Left colon (tissue), 2 donors: ENCODE measurements at regions of chr21 and their contacts with region 1.

Region 1: DNA sequence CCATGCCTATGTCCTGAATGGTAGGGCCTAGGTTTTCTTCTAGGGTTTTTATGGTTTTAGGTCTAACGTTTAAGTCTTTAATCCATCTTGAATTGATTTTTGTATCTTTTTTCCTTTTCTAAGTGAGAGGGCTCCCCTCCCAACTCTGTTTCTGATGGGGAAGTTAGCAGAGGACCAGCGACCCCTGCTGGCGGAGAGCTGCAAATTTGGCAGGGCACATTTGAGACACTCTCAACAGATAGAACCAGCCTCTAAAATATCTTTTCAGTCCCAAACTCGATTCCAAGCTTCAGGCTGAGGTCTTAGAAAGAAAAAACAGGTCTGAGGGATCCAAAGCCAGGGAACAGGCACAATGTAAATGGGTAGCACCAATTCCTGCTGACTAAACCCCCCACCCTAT is 32.5 kb downstream of the LRRC3 start:
- DNase-seq: no peak
- ATAC-seq: no peak

Region 2: DNA sequence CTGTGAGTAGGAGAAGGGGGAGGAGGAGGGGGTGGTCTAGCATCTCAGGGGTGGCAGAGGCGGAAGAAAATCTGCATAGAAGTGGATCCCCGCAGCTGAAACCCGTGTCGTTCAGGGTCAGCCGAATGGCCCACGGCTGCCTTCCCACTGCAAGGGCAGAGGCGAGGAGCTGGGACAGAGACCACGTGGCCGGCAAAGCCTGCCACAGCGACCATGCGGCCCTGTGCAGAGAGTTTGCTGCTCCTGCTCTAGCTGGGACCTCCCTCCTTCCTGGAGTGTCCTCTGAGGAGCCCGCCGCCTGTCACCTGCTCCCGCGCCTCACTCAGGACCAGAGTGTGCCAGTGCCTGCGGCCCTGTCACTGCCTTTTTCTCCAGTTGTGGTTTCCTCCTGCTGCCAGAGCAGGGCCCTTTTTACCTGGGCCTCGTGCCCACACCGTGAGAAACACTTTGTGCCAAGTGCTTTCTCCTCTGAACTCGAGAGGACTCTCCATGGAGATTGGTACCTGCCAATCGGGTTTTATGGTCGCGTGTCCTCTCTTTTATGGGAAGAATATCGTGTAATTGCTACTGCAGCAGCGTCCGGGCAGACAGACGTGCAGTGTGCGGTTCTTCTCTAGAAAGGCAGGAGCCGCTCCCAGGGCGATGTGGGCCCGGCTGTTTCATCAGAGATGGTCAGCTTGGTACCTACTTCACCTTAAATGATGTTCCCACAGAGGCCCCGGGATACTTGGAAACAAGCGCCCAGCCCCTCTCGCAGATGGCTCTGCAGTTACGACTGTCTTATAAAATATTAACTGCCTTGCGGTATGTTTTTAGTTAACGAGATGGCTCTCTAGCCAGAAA is 139.7 kb before region 1 on chr21:
- intact Hi-C with region 1: loop called in 1 of 2 experiments (anchors 10 kb)
- DNase-seq: no peak
- ATAC-seq: peak; percentile 67

Region 3: GRCh38 chr21:45109831-45110492 is 622.1 kb after region 1 on chr21:
- intact Hi-C with region 1: no loop called
- DNase-seq: no peak
- ATAC-seq: no peak